ENCODE measurements at regions of chr18 and their contacts with region 1.

Region 1: GRCh38 chr18:27599202-27599829 is 414.2 kb upstream of the CHST9 start:
- DNase-seq: peak; percentile 23
- CTCF ChIP-seq: peak; percentile 85

Region 2: GRCh38 chr18:27585601-27586173 is 13.6 kb before region 1 on chr18:
- CTCF ChIA-PET with region 1: interaction called, 17 read pairs
- POLR2A ChIA-PET with region 1: no interaction called
- DNase-seq: no peak
- CTCF ChIP-seq: no peak

Region 3: DNA sequence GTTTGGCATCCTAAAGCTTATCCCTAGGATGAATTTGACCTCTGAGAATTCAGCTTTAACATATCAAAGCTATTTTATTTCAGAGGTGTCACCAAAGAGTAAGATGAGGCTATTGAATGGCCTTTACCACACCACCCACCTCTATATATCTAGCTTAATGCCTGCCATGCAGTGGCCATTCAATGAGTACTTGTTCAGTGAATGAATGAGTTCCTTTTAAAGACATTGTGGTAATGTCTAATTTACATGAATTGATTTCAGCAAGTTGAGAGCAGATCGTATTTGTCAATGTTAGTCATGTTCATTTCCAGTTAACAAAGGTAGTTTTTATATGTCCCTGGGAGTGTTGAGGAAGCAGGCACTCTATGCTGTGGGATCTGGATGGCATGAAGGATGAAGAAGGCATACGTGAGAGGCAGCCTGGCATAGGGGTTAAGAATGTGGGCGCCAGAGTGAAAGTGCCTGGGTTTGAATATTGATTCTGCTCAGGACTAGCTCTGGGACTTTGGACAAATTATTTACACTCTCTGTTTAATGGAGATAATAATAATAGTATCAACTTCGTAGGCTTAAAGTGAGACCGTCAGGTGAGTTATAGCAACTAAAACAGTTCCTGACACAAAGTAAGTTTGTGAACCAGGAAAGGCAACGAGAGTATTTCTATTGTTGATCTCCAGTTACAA is 19.9 kb after region 1 on chr18:
- CTCF ChIA-PET with region 1: interaction called, 19 read pairs
- POLR2A ChIA-PET with region 1: no interaction called
- DNase-seq: no peak
- CTCF ChIP-seq: no peak